Tibial artery (tissue), 4 donors: ENCODE measurements at regions of chr4 and their contacts with region 1.

Region 1: GRCh38 chr4:173370477-173371291 is at the start of gene SAP30:
- DNase-seq: peak; percentile 99 to 100
- H3K4me3 ChIP-seq: peak within 1 kb of the TSS; percentile 68 to 94
- H3K27ac ChIP-seq: peak within 1 kb of the TSS; percentile 91 to 99
- H3K4me1 ChIP-seq: peaks cover 0 to 54% (median 18%) of the 10 kb centered on the region in 4 donors
- H3K27me3 ChIP-seq: no peaks in the 10 kb centered on the region
- CTCF ChIP-seq: no peak

Region 2: DNA sequence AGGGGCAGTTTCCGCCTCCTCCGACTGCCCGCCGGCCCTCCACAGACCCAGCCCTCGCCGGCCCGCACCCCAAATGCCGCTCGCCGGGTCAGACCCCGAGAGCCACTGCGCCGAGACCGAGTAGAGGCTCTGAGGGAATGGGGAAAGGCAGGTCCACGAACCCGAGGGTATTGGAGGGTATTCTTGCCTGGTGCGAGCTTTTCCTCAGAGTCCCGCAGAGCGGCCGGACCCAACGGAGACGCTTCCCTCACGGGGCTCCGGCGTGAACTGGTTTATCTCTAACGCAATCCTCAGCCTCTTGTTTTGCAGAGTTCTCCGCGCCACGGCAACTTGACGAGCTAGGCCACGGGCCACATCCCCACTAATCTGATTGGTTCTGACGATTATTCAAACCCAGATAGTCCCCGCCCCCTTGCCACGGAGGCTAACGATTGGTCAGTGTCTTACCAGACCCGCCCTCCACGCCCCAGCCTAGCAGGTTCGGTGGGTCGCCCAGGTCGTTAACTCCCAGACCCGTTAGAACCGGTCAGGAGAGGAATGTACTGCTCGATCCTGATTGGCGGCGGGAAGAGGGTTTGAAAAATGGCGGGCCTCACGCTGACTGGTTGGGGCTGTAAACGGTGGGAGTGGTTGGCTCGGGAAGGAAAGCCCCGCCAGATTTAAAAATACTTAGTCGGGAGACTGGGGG is 36.5 kb before region 1 on chr4 and contains the start of gene HMGB2:
- intact Hi-C with region 1: loop called (anchors 2 kb)
- DNase-seq: peak; percentile 100
- H3K4me3 ChIP-seq: peak within 1 kb of the TSS; percentile 92 to 98
- H3K27ac ChIP-seq: peak within 1 kb of the TSS; percentile 100
- H3K4me1 ChIP-seq: peaks cover 0 to 32% (median 17%) of the 10 kb centered on the region in 4 donors
- H3K27me3 ChIP-seq: no peaks in the 10 kb centered on the region
- CTCF ChIP-seq: no peak

Region 3: DNA sequence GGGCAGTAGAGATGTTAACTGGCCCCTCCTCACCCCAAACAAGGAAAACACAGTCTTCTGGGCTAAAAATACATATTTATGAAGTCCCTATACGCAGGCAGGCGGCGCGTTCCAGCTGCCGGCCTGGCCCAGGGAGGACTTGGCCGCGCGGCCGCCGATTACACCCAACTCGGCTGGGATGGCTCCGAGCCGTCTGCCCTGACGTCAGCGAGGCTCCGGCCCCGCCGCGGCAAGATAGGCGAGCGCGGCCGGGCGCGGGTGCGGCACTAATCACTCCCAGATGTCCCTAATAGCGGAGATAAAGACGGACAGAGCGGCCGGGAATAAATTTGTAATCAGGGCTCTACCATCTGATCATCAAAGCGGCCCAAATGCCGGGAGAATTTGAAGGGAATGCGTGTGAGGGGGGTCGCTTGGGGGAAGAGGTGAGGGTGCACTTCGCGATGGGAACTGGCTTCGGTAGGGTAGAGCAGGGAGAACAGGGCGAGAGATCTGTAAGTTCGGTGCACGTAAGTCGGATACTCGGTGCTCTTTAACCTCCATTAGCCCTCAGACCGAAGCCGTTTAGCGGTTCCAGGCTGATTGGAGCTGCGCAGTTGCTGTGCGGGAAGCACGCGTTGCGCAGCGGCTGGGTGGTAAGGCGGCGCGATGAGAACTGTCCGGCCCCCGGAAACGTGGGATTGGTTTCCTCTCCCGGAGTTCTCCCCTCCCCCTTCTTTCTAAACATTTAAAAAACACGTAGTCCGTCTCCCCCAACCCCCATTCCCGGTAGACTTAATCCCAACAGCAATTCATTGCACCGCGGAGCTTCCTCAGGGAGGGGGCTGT is 151.7 kb after region 1 on chr4:
- intact Hi-C with region 1: loop called (anchors 5 kb)
- DNase-seq: peak; percentile 85 to 95
- H3K4me3 ChIP-seq: peak overlapping the region; percentile 61 to 64
- H3K27ac ChIP-seq: peak overlapping the region; percentile 97 to 99
- H3K4me1 ChIP-seq: peaks cover 0 to 70% (median 33%) of the 10 kb centered on the region in 4 donors
- H3K27me3 ChIP-seq: no peaks in the 10 kb centered on the region
- CTCF ChIP-seq: peak; percentile 1 to 6